ENCODE measurements at regions of chr22 and their contacts with region 1.

Region 1: DNA sequence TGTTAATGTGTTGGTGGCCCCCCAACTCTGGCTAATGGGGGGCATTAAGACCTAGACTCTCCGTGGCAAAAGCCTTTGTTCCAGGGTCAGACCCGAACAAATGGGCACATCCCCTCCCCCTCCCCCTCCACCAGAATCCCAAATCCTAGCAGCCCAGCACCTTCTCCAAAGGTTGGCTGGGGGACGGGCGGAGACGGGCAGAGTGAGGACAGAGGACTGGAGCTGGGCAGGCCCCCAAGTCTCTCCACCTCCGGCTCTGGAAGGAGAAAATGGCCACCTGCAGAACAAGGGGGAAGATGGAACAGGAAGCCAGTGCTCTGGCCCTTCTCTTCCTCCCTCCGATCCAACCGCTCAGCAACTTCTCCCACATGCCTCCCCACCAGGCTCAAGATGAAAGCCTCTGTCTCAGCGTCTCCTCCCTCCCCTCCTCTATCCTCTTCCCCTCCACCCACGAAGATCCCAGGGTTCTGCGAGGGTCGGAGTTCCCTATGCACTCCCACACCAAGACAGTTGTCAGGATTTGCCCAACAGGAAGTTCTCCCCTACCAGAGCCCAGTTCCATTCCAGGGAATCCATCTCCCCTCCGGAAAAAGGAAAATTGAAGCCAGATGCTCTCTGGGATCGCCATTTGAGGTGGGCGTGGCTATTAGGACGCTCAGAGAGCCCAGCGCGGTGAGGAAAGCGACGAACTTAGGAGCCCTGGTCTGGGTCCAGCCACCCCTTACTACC is 20.1 kb downstream of the ADA2 start:
- DNase-seq: no peak
- CTCF ChIP-seq: no peak

Region 2: DNA sequence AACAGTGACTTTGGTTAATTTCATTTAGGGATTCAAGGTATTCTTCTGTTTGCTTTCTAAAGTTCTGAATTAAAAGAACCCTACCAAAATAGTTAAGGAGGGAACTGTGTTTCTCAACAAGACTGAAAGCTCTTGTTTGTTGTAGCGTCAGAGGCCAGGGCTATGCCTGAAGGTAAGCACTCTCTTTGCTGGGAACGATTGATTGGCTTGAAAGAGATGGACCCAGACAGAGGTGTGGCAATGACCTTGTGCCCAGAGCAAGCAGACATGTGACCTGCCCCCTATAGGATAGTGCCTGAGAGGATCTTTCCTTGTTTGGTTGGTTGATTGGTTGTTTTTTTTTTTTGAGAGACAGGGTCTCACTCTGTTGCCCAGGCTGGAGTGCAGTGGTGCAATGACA is 101.8 kb after region 1 on chr22:
- in situ Hi-C with region 1: no loop called
- DNase-seq: no peak
- CTCF ChIP-seq: no peak

Region 3: GRCh38 chr22:17477391-17477833 is 278.2 kb after region 1 on chr22:
- in situ Hi-C with region 1: loop called (anchors 25 kb)
- DNase-seq: no peak
- CTCF ChIP-seq: no peak

Region 4: GRCh38 chr22:17830043-17830961 is 631.1 kb after region 1 on chr22:
- in situ Hi-C with region 1: no loop called
- DNase-seq: peak; percentile 89
- CTCF ChIP-seq: peak; percentile 98

Measured in GM13977 (cell line).